ENCODE measurements at regions of chr22 and their contacts with region 1.

Region 1: DNA sequence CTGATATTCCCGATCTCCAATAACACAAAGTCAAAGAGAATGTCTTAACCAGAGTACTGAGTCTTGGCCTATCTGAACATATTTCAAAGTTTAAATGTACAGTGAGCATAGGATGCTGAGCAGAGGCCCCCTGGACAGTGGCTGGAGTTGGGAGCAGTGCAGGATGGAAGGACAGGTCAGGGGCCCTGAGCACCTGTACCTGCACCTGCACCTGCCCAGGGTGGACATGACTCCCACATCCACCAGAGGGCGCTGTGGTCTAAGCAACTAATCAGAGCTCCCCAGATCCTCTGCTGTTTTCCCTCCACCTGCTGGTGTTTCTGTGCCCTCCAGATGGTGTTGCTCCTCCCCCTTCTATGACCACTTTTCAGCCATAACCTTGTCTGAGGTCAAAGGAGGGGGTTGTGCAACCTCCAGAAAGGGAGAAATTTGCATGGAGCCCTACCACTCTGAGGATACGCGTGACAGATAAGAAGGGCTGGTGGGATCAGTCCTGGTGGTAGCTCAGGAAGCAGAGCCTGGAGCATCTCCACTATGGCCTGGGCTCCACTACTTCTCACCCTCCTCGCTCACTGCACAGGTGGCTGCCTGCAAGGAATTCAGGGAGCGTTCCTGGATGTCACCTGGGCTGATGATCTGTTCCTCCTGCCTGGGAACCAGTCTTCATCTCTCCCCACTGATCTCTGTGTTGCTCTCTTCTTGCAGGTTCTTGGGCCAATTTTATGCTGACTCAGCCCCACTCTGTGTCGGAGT is 49.1 kb upstream of the VPREB1 start:
- DNase-seq: peak; percentile 99
- H3K4me3 ChIP-seq: peak overlapping the region; percentile 79
- H3K27ac ChIP-seq: peak overlapping the region; percentile 95
- H3K4me1 ChIP-seq: peaks cover 57% of the 10 kb centered on the region
- CTCF ChIP-seq: peak; percentile 99

Region 2: GRCh38 chr22:22043296-22044078 is 152.0 kb before region 1 on chr22:
- CTCF ChIA-PET with region 1: no interaction called
- POLR2A ChIA-PET with region 1: interaction called, 14 read pairs
- intact Hi-C with region 1: loop called (anchors 5 kb)
- DNase-seq: peak; percentile 81
- H3K4me3 ChIP-seq: peak overlapping the region; percentile 70
- H3K27ac ChIP-seq: peak overlapping the region; percentile 84
- H3K4me1 ChIP-seq: peaks cover 96% of the 10 kb centered on the region
- CTCF ChIP-seq: peak; percentile 70

Region 3: GRCh38 chr22:22110548-22111266 is 84.7 kb before region 1 on chr22:
- CTCF ChIA-PET with region 1: interaction called, 5 read pairs
- POLR2A ChIA-PET with region 1: interaction called, 13 read pairs
- intact Hi-C with region 1: no loop called
- DNase-seq: peak; percentile 95
- H3K4me3 ChIP-seq: peak overlapping the region; percentile 38
- H3K27ac ChIP-seq: peak overlapping the region; percentile 64
- H3K4me1 ChIP-seq: peaks cover 34% of the 10 kb centered on the region
- CTCF ChIP-seq: peak; percentile 89

Region 4: DNA sequence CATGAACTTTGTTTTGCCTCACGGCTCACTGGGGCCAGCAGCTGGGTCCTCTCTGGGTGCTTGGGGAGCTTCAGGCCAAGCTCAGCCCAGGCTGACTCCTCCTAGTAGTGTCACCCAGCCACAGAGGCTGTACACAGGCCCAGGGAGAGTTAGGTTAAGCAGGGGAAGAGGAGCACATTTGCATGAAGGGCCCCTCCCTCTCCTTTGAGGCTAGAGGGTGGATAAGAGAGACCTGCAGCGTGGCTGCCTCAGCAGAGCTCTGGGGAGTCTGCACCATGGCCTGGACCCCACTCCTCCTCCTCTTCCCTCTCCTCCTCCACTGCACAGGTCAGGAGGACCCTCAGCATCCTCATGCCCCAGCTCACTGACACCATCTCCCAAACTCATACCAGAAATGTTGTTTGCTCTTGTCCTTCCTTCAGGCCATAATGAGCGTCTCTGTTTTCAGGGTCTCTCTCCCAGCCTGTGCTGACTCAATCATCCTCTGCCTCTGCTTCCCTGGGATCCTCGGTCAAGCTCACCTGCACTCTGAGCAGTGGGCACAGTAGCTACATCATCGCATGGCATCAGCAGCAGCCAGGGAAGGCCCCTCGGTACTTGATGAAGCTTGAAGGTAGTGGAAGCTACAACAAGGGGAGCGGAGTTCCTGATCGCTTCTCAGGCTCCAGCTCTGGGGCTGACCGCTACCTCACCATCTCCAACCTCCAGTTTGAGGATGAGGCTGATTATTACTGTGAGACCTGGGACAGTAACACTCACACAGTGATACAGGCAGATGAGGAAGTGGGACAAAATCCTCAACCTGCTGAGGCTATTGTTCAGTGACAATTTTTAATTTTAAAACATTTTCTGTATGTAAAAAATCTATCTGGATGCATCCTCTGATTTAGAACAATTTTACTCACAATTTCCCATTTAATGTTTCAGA is 33.3 kb before region 1 on chr22:
- CTCF ChIA-PET with region 1: interaction called, 9 read pairs
- POLR2A ChIA-PET with region 1: interaction called, 93 read pairs
- intact Hi-C with region 1: loop called (anchors 1 kb)
- DNase-seq: peak; percentile 95
- H3K4me3 ChIP-seq: peak overlapping the region; percentile 66
- H3K27ac ChIP-seq: peak overlapping the region; percentile 99
- H3K4me1 ChIP-seq: peaks cover 84% of the 10 kb centered on the region
- CTCF ChIP-seq: no peak

Region 5: DNA sequence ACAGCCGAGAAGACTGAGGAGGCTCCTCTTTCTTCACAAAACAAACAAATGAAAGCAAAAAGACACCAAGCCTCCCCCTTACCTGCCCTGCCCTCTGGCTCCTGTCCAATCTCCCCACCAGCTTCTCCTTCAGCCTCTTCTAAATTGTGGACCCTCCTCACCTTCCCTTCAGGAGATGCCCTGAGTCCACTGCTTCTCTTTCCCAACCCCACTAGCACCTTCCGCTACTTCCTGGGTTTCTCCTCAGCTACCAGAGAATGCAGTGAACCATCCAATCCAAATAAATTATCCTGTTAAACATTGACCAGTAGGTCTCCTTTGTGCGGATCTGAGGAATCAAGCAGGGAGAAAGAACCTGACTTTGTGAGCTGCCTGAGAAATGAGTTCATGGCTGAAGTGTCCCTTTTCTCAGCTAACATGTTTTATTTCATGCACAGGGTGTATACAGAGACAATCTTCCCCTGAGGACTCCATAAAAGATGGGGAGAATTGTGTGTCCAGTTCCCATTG is 14.0 kb before region 1 on chr22:
- CTCF ChIA-PET with region 1: no interaction called
- POLR2A ChIA-PET with region 1: interaction called, 10 read pairs
- intact Hi-C with region 1: no loop called
- DNase-seq: no peak
- H3K4me3 ChIP-seq: no peak overlapping the region
- H3K27ac ChIP-seq: no peak overlapping the region
- H3K4me1 ChIP-seq: peaks cover 44% of the 10 kb centered on the region
- CTCF ChIP-seq: no peak